Transverse colon (tissue), 4 donors: ENCODE measurements at regions of chr10 and their contacts with region 1.

Region 1: GRCh38 chr10:13776861-13777311 is 190.1 kb downstream of the PRPF18 start:
- DNase-seq: no peak
- H3K4me3 ChIP-seq: no peak overlapping the region
- H3K27ac ChIP-seq: no peak overlapping the region
- H3K4me1 ChIP-seq: peaks cover 0 to 3% (median 0%) of the 10 kb centered on the region in 4 donors
- H3K27me3 ChIP-seq: no peaks in the 10 kb centered on the region
- CTCF ChIP-seq: no peak
- EP300 ChIP-seq: no peak
- POLR2A ChIP-seq: no peak

Region 2: GRCh38 chr10:13340626-13341376 is 436.1 kb before region 1 on chr10:
- in situ Hi-C with region 1: no loop called
- intact Hi-C with region 1: no loop called
- DNase-seq: peak; percentile 62
- H3K4me3 ChIP-seq: no peak overlapping the region
- H3K27ac ChIP-seq: peak overlapping the region in 3 of 4 donors; percentile 7 to 20 (median 8)
- H3K4me1 ChIP-seq: peaks cover 13 to 43% (median 22%) of the 10 kb centered on the region in 4 donors
- H3K27me3 ChIP-seq: no peaks in the 10 kb centered on the region
- CTCF ChIP-seq: no peak
- EP300 ChIP-seq: no peak
- POLR2A ChIP-seq: no peak

Region 3: DNA sequence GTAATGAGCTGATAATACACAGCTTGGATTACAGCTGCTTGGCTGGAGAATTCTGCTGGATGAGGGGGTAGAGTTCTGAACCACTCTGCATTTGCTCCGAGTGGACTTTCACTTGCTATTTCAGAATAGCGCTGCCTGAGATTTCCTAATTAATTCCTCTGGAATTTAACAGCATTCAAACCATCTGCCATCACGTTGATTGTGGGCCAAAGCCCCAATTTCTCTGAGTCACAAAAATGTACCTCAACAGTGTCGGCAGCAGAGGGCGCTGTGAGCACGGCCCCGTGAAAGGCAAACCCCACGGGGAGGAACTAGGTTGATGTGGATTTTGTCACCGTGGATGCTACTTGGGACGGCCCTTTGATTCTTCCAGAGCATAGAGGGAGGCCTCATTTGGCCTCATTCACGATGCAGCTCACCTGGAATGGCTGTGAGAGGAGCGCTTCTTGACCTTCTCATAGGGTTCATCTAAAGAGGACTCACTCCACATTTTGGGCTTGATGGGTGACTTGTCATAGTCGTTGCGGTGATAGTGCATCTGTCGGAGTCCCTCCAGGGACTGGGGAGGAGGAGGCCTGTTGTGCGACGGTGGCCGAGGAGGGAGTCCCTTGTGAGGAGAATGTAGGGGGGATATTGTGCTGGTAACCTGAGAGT is 116.9 kb before region 1 on chr10:
- in situ Hi-C with region 1: loop called (anchors 5 to 10 kb)
- intact Hi-C with region 1: loop called (anchors 5 kb)
- DNase-seq: peak; percentile 59
- H3K4me3 ChIP-seq: no peak overlapping the region
- H3K27ac ChIP-seq: peak overlapping the region in 3 of 4 donors; percentile 6 to 28 (median 14)
- H3K4me1 ChIP-seq: peaks cover 0 to 10% (median 2%) of the 10 kb centered on the region in 4 donors
- H3K27me3 ChIP-seq: no peaks in the 10 kb centered on the region
- CTCF ChIP-seq: peak; percentile 84 to 90 (median 89)
- EP300 ChIP-seq: no peak
- POLR2A ChIP-seq: no peak

Region 4: GRCh38 chr10:13669182-13669865 is 107.6 kb before region 1 on chr10:
- in situ Hi-C with region 1: loop called (anchors 5 to 10 kb)
- intact Hi-C with region 1: loop called (anchors 5 kb)
- DNase-seq: no peak
- H3K4me3 ChIP-seq: no peak overlapping the region
- H3K27ac ChIP-seq: no peak overlapping the region
- H3K4me1 ChIP-seq: no peaks in the 10 kb centered on the region
- H3K27me3 ChIP-seq: no peaks in the 10 kb centered on the region
- CTCF ChIP-seq: no peak
- EP300 ChIP-seq: no peak
- POLR2A ChIP-seq: no peak

Region 5: GRCh38 chr10:13751191-13751764 is 25.6 kb before region 1 on chr10:
- in situ Hi-C with region 1: no loop called
- intact Hi-C with region 1: no loop called
- DNase-seq: no peak
- H3K4me3 ChIP-seq: no peak overlapping the region
- H3K27ac ChIP-seq: no peak overlapping the region
- H3K4me1 ChIP-seq: no peaks in the 10 kb centered on the region
- H3K27me3 ChIP-seq: no peaks in the 10 kb centered on the region
- CTCF ChIP-seq: no peak
- EP300 ChIP-seq: no peak
- POLR2A ChIP-seq: no peak